ENCODE measurements at regions of chr21 and their contacts with region 1.

Region 1: GRCh38 chr21:34526618-34527290 is 14.7 kb upstream of the KCNE1 start:
- DNase-seq: no peak
- H3K4me3 Mint-ChIP-seq: peak overlapping the region; percentile 66
- H3K27ac Mint-ChIP-seq: peak overlapping the region; percentile 89
- H3K4me1 Mint-ChIP-seq: peaks cover 33% of the 10 kb centered on the region
- H3K27me3 Mint-ChIP-seq: peaks cover 6% of the 10 kb centered on the region

Region 2: GRCh38 chr21:34202553-34203372 is 324.0 kb before region 1 on chr21:
- intact Hi-C with region 1: loop called (anchors 2 kb)
- DNase-seq: no peak
- H3K4me3 Mint-ChIP-seq: no peak overlapping the region
- H3K27ac Mint-ChIP-seq: peak overlapping the region; percentile 48
- H3K4me1 Mint-ChIP-seq: peaks cover 71% of the 10 kb centered on the region
- H3K27me3 Mint-ChIP-seq: no peaks in the 10 kb centered on the region

Region 3: GRCh38 chr21:34545079-34545884 is 18.5 kb after region 1 on chr21:
- intact Hi-C with region 1: loop called (anchors 1 kb)
- DNase-seq: no peak
- H3K4me3 Mint-ChIP-seq: no peak overlapping the region
- H3K27ac Mint-ChIP-seq: peak overlapping the region; percentile 18
- H3K4me1 Mint-ChIP-seq: peaks cover 20% of the 10 kb centered on the region
- H3K27me3 Mint-ChIP-seq: no peaks in the 10 kb centered on the region

Region 4: GRCh38 chr21:34614633-34615486 is 88.1 kb after region 1 on chr21 and contains the start of gene RCAN1:
- intact Hi-C with region 1: loop called (anchors 1 kb)
- DNase-seq: peak; percentile 86
- H3K4me3 Mint-ChIP-seq: peak within 1 kb of the TSS; percentile 85
- H3K27ac Mint-ChIP-seq: peak within 1 kb of the TSS; percentile 57
- H3K4me1 Mint-ChIP-seq: peaks cover 30% of the 10 kb centered on the region
- H3K27me3 Mint-ChIP-seq: peaks cover 5% of the 10 kb centered on the region
- total RNA-seq, gene RCAN1: 10.7 and 11.1 TPM in 2 replicates

Region 5: DNA sequence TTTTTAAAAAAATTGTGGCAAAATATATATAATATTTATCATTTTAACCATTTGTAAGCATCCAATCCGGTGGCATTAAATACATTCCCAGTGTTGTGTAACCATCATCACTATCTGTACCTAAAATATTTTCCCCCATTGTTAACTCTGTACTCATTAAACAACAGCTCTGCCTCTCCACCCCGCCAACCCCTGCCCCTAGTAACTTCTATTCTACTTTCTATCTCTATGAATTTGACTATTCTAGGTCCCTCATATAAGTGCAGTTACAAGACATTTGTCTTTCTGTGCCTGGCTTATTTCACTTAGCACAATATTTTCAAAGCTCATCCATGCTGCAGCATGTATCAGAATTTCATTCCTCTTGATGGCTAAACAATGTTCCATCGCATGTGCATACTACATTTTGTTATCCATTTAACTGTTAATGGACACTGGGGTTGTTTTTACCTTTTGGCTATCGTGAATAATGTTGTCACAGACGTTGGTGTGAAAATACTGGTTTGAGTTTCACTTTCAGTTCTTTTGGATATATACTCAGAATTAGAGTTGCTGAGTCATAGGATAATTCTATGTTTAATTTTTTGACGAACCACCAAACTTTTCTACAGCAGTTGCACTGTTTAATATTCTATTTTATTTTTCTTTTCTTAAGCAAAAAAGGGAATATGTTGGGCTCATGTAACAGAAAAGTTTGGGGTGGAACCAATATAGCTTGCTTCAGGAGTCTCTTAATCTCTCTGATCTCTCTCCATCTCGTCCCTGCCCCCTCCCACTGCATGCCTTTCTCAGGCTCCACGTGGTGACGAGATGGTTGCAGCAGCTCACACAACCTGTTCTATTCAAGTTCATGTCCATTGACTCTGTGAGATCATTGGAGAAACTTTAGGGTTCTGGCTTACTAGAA is 113.4 kb after region 1 on chr21:
- intact Hi-C with region 1: loop called (anchors 1 kb)
- DNase-seq: peak; percentile 16
- H3K4me3 Mint-ChIP-seq: peak overlapping the region; percentile 73
- H3K27ac Mint-ChIP-seq: peak overlapping the region; percentile 79
- H3K4me1 Mint-ChIP-seq: peaks cover 37% of the 10 kb centered on the region
- H3K27me3 Mint-ChIP-seq: peaks cover 11% of the 10 kb centered on the region

Measured in activated T-helper 1 cell treated with anti-CD3 and anti-CD28 coated beads, Interleukin-12 subunit alpha, Interleukin-12 subunit beta, Interleukin-2, Interleukin-4 antibody, amounts not matched to agents 30 ng/mL and 10 ng/mL and 1 ng/mL, durations not matched to agents 14 hours and 24 hours and 36 hours (primary cell).